ENCODE measurements at regions of chr2 and their contacts with region 1.

Region 1: DNA sequence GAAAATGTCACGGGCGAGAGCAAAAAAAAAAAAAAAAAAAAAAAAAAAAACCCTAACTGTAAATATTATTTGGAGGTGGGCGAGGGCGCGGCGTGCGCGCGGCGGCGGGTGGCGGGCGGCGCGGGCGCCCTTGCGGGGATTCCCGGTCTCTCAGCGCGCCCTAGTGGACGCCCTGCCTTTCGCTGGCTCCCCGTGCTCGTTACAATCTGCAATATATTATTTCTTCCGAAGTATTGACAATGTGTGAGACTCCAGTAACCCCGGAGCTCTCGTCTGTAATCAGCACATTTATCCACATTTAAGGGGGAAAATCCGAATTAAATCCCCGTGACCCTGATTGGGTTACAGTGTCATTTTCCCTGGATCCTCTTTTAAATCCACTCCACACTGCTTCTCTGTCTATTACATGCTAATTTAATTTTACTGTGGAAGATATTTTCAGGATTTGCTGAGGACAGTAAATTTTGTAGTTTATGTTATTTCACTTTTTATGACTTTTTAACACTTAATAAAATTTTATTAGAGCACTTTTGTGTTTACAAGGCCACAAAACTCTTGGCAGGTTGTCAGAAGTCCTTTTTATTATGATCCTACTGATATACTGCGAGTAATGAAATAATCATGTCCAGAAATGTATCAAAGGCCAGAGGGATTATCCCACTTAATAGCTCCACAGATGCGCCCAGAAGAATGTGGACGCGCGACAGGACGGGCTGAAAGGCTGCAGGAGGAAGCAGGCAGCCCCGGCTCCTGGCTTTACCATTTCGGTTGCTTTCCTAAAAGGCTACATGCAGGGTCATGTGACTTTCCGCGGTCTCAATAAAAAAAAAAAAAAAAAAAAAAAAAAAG is 369.1 kb downstream of the MTX2 start:
- DNase-seq: peak; percentile 87
- H3K4me3 Mint-ChIP-seq: peak overlapping the region; percentile 77
- H3K27ac Mint-ChIP-seq: no peak overlapping the region
- H3K4me1 Mint-ChIP-seq: peaks cover 5% of the 10 kb centered on the region
- H3K27me3 Mint-ChIP-seq: peaks cover 62% of the 10 kb centered on the region

Region 2: DNA sequence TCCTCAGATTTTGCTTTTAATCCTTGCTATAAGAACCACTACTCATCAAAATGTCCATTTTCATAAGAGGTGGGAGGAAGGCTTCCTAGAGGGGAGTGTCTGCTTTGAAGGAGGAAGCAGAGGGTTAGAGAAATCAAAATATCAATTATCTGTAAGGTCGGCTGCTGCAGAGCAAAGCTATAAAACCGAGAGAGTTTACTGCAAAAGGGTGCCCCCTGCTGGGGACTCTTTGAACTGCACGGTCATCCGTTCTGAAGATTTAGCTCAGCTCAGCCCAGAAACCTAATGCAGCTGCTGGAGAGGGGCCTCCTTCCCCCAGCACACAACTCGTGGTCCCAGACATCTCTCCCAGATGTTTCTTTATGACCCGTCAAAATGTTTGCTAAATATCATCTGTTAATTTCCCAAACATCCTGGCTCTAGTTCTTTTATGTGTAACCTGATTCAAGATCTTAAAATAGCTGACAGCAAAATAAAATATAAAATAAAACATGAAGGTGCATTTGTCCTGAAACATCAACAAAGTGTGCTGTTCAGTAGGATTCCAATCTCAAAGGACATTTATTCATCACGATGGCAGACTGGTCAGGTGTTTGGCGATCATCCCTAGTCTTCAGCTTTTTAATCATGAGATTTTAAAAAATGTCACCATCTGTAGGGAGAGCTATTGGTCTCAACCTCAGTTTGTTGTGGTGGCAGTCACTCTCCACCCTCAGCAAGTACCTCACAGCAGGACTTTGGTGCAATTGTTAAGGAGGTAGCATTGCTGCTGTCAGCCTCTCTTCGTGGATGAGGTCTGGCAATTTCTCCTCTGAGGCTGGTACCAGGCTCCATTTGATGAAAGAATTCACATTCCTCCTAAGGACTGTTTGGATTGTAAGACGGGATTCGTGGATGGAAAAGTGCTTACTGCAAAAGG is 183.2 kb before region 1 on chr2:
- intact Hi-C with region 1: loop called (anchors 1 kb)
- DNase-seq: peak; percentile 93
- H3K4me3 Mint-ChIP-seq: no peak overlapping the region
- H3K27ac Mint-ChIP-seq: no peak overlapping the region
- H3K4me1 Mint-ChIP-seq: no peaks in the 10 kb centered on the region
- H3K27me3 Mint-ChIP-seq: peaks cover 41% of the 10 kb centered on the region

Region 3: GRCh38 chr2:176709149-176709951 is 71.0 kb after region 1 on chr2:
- intact Hi-C with region 1: no loop called
- DNase-seq: no peak
- H3K4me3 Mint-ChIP-seq: no peak overlapping the region
- H3K27ac Mint-ChIP-seq: no peak overlapping the region
- H3K4me1 Mint-ChIP-seq: no peaks in the 10 kb centered on the region
- H3K27me3 Mint-ChIP-seq: peaks cover 4% of the 10 kb centered on the region

Measured in activated CD4-positive, alpha-beta T cell treated with anti-CD3 and anti-CD28 coated beads, Interleukin-2, amount 10 ng/mL, durations not matched to agents 24 days and 14 days (primary cell).